ENCODE measurements at regions of chr3 and their contacts with region 1.

Region 1: GRCh38 chr3:151210676-151211381 is 7.8 kb upstream of the GPR171 start:
- DNase-seq: peak; percentile 46
- ATAC-seq: peak; percentile 79
- H3K4me3 Mint-ChIP-seq: peak overlapping the region; percentile 82
- H3K27ac Mint-ChIP-seq: peak overlapping the region; percentile 90
- H3K4me1 Mint-ChIP-seq: peaks cover 51% of the 10 kb centered on the region
- H3K27me3 Mint-ChIP-seq: no peaks in the 10 kb centered on the region

Region 2: DNA sequence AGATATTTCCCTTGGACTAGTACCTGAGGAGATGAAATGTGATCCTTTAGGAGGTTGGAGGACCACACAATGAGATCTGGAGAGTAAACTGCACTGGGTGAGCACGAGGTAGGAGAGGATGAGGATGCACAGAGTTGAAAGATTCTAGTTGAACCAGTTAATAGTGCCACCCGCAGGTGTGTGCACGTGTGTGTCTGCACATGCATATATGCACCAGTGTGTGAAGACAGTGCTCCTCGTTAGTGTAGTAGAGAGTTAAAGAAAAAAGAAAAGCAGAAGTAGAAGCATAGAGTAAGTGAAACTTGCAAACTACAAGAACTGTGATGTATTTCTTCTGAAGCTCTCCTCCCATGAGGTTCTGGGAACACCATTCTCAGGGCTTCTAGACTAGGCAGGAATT is 116.9 kb before region 1 on chr3:
- POLR2A ChIA-PET with region 1: no interaction called
- DNase-seq: no peak
- ATAC-seq: no peak
- H3K4me3 Mint-ChIP-seq: no peak overlapping the region
- H3K27ac Mint-ChIP-seq: no peak overlapping the region
- H3K4me1 Mint-ChIP-seq: no peaks in the 10 kb centered on the region
- H3K27me3 Mint-ChIP-seq: peaks cover 19% of the 10 kb centered on the region

Region 3: DNA sequence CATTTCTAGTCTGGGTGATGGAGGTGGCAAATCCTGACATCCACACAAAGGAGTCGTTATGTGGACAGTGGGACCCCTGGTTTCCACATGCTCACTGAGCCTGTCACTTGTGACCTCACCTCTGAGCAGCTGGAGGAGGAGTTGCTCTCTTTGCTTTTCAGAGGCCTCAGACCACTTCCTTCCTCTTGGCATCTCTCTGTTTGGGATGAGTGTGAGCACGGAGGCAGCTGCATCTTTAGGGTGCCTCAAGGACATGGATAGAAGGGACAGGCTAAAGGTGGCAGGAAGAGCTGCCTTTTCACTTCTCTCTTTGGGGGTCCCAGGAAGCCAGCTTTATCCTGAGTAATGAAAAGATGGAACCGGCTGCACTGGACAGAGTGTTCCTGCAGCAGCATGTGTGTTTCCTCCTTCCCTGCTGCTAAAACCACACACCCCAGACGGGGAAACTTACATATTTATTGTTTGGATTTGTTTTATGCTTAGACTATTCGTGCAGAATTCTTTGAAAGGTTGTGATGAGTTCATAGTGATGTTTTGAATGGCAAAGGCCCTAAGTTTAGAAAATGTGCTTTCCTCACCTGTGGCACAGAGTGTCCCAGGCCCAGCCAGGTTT is 39.6 kb before region 1 on chr3:
- POLR2A ChIA-PET with region 1: interaction called, 10 read pairs
- DNase-seq: peak; percentile 44
- ATAC-seq: peak; percentile 89
- H3K4me3 Mint-ChIP-seq: peak overlapping the region; percentile 71
- H3K27ac Mint-ChIP-seq: peak overlapping the region; percentile 89
- H3K4me1 Mint-ChIP-seq: peaks cover 45% of the 10 kb centered on the region
- H3K27me3 Mint-ChIP-seq: no peaks in the 10 kb centered on the region

Measured in activated naive CD8-positive, alpha-beta T cell treated with anti-CD3 and anti-CD28 coated beads, Interleukin-2, amount 10 ng/mL, durations not matched to agents 7 days and 5 days (primary cell).